SK-N-SH (cell line): ENCODE measurements at regions of chr19 and their contacts with region 1.

Region 1: GRCh38 chr19:32373585-32374295 is 28.3 kb downstream of the ZNF507 start:
- DNase-seq: no peak
- H3K4me3 ChIP-seq: peak overlapping the region in 1 of 2 experiments; percentile 41; a peak in 3 of 4 replicates
- H3K27ac ChIP-seq: peak overlapping the region; percentile 11 to 92; a peak in 3 of 4 replicates
- H3K4me1 ChIP-seq: peaks cover 0 to 9% of the 10 kb centered on the region in 2 experiments; a peak in 1 of 4 replicates
- H3K27me3 ChIP-seq: no peaks in the 10 kb centered on the region
- CTCF ChIP-seq: no peak
- EP300 ChIP-seq: peak in 1 of 2 experiments; percentile 78; a peak in 2 of 4 replicates
- RAD21 ChIP-seq: no peak

Region 2: DNA sequence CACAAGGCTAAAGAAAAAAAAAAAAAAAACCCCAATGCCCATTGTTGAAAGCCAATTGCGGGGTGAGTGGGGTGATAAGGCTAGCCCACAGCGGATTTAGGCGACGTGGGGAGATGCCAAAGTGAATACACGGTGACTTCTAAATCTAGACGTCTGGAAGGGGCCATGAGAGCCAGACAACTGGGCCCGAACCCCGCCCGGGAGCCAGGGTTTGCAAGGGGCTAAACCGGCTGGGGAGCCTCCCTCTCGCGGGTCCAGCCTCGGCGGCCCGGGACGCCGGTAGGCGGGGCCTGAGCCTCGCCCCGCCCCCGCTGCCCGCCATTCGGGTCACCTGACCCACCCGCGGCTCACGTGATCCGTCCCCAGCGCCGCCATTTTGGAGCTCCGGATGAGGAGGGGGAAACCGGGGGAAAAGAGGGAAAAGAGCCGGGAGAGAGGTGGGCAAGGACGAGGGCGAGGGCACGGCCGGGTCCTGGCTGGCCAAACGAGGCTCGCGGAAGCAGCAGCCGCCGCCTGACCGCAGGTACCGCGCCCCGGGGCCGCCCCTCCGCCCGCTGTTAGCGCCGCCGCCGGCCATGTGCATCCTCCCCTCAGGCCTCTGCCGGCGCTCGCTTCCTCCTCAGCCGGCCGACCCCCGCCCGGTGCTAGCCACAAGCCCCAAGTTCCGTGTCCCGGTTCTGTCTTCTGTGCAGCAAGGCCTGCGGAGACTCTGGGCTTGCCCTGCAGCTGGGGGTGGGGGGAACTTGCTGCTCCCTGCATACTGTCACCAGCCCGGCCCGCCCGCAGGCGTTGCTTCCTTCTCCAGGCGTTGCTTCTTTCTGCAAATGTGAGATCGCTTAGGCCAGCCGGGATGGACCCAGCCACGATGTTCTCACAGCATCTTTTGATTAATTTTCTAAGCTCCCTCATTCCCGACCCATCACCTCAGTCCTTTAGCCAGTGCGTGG is 28.2 kb before region 1 on chr19 and contains the start of gene ZNF507:
- CTCF ChIA-PET with region 1: no interaction called
- POLR2A ChIA-PET with region 1: no interaction called
- DNase-seq: peak; percentile 99
- H3K4me3 ChIP-seq: peak within 1 kb of the TSS; percentile 84 to 99
- H3K27ac ChIP-seq: peak within 1 kb of the TSS; percentile 70 to 86
- H3K4me1 ChIP-seq: peaks cover 5 to 11% of the 10 kb centered on the region in 2 experiments; a peak in 3 of 4 replicates
- H3K27me3 ChIP-seq: no peaks in the 10 kb centered on the region
- CTCF ChIP-seq: peak; percentile 28; the same call in 1 of the 2 replicates
- EP300 ChIP-seq: peak in 1 of 2 experiments; percentile 45; a peak in 1 of 4 replicates
- RAD21 ChIP-seq: no peak
- polyA plus RNA-seq, gene ZNF507: 6.8 and 9.1 TPM in 2 replicates

Region 3: DNA sequence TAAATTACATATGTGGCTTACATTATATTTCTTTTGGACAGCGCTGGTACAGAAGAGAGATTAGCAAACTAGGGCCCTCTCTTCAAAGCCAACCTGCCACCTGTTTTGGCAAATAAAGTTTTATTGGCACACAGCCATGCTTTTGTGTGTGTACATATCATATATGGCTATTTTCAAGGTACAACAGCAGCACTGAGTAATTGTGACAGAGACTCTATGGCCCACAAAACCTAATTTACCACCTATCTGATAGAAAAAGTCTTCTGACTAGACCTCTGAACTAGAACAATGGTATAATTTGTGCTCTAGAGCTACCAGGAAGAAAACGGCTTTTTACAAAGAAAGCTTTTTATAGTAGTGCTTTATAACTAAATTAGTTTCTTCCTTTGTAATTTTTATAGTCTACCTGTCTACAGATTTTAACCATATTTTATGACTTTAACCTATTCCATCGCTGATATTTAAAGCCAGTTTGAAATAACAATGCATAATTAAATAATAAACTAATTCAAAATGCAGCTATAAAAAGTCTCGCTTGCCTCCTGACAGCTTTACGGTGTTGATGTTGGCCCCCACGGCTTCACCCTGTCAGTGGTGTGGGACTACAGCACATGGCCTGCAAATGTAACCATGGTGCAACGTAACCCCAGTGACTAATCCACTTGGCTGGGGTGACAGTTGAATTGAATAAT is 14.1 kb after region 1 on chr19:
- CTCF ChIA-PET with region 1: interaction called, 11 read pairs
- POLR2A ChIA-PET with region 1: no interaction called
- DNase-seq: no peak
- H3K4me3 ChIP-seq: no peak overlapping the region
- H3K27ac ChIP-seq: no peak overlapping the region
- H3K4me1 ChIP-seq: no peaks in the 10 kb centered on the region; a peak in 1 of 4 replicates
- H3K27me3 ChIP-seq: no peaks in the 10 kb centered on the region
- CTCF ChIP-seq: no peak
- EP300 ChIP-seq: no peak
- RAD21 ChIP-seq: no peak